Natural killer cell (primary cell): ENCODE measurements at regions of chr10 and their contacts with region 1.

Region 1: GRCh38 chr10:13099666-13100348 is at the start of gene OPTN:
- DNase-seq: peak; percentile 76 to 92
- ATAC-seq: peak; percentile 79 to 92 (median 85)
- H3K4me3 ChIP-seq: peak within 1 kb of the TSS; percentile 73
- H3K4me3 Mint-ChIP-seq: peak within 1 kb of the TSS; percentile 96
- H3K27ac ChIP-seq: peak within 1 kb of the TSS; percentile 91
- H3K27ac Mint-ChIP-seq: peak within 1 kb of the TSS; percentile 89 to 92
- H3K4me1 ChIP-seq: peaks cover 25% of the 10 kb centered on the region
- H3K4me1 Mint-ChIP-seq: peaks cover 43 to 47% of the 10 kb centered on the region in 2 donors
- H3K27me3 ChIP-seq: no peaks in the 10 kb centered on the region
- H3K27me3 Mint-ChIP-seq: no peaks in the 10 kb centered on the region
- CTCF ChIP-seq: peak; percentile 33
- total RNA-seq, gene OPTN: 140 to 177 (median 161) TPM

Region 2: DNA sequence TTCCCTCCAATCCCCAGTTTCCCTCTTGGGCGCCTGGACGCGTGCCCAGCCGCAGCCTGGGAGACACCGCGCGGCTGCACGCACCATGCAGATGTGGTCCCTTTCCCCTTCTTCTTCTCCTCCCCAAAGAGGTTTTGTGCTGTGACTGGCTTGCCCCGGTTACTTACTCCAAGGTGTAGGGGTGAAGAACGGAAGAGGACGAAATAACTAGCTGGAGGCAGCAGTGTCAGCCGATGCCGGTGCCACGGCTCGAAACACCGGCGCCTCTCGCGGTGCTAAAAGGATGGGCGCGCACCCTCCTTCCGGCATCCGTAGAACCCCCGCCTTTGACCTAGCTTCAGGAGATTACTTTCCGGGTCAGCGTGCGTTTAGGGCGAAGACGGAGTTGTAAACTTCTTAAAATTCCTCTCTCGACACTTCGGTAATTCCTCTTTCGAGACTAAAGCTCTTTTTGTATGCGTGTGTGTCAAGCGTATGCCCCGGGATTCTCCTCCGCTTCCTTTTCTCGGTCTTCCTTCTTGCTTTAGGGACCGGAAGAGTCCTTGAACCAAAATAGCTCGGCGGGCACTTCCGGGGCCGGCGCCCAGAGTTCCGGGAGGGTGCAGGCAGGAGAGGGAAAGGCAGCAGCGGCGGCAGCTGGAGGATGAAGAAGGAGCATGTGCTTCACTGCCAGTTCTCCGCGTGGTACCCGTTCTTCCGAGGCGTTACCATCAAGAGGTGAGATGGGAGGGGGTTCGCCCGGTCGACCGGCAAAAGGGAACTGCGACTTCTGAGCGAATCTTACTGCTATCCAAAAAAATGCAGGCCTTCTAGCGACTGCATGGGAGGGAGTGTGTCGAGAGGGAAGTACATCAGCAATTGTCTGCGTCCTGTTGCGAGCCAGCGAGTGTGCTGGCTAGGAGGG is 904.0 kb before region 1 on chr10 and contains the starts of genes CDC123 and NUDT5:
- intact Hi-C with region 1: loop called (anchors 10 kb)
- DNase-seq: peak; percentile 76 to 92
- ATAC-seq: peak; percentile 93 to 96 (median 94)
- H3K4me3 ChIP-seq: peak within 1 kb of the TSS; percentile 92
- H3K4me3 Mint-ChIP-seq: peak within 1 kb of the TSS; percentile 98
- H3K27ac ChIP-seq: peak within 1 kb of the TSS; percentile 93
- H3K27ac Mint-ChIP-seq: peak within 1 kb of the TSS; percentile 97 to 99
- H3K4me1 ChIP-seq: peaks cover 20% of the 10 kb centered on the region
- H3K4me1 Mint-ChIP-seq: peaks cover 48 to 55% of the 10 kb centered on the region in 2 donors
- H3K27me3 ChIP-seq: no peaks in the 10 kb centered on the region
- H3K27me3 Mint-ChIP-seq: no peaks in the 10 kb centered on the region
- CTCF ChIP-seq: no peak
- total RNA-seq, gene CDC123: 45.8 to 53.3 (median 47.6) TPM
- total RNA-seq, gene NUDT5: 25.7 to 39.1 (median 29.4) TPM

Region 3: GRCh38 chr10:13115832-13116803 is 16.3 kb after region 1 on chr10:
- intact Hi-C with region 1: loop called (anchors 2 kb)
- DNase-seq: peak in 1 of 2 donors; percentile 66
- ATAC-seq: peak; percentile 86 to 88 (median 87)
- H3K4me3 ChIP-seq: no peak overlapping the region
- H3K4me3 Mint-ChIP-seq: peak overlapping the region; percentile 81
- H3K27ac ChIP-seq: peak overlapping the region; percentile 90
- H3K27ac Mint-ChIP-seq: peak overlapping the region; percentile 94
- H3K4me1 ChIP-seq: peaks cover 23% of the 10 kb centered on the region
- H3K4me1 Mint-ChIP-seq: peaks cover 42 to 44% of the 10 kb centered on the region in 2 donors
- H3K27me3 ChIP-seq: no peaks in the 10 kb centered on the region
- H3K27me3 Mint-ChIP-seq: no peaks in the 10 kb centered on the region
- CTCF ChIP-seq: no peak

Region 4: DNA sequence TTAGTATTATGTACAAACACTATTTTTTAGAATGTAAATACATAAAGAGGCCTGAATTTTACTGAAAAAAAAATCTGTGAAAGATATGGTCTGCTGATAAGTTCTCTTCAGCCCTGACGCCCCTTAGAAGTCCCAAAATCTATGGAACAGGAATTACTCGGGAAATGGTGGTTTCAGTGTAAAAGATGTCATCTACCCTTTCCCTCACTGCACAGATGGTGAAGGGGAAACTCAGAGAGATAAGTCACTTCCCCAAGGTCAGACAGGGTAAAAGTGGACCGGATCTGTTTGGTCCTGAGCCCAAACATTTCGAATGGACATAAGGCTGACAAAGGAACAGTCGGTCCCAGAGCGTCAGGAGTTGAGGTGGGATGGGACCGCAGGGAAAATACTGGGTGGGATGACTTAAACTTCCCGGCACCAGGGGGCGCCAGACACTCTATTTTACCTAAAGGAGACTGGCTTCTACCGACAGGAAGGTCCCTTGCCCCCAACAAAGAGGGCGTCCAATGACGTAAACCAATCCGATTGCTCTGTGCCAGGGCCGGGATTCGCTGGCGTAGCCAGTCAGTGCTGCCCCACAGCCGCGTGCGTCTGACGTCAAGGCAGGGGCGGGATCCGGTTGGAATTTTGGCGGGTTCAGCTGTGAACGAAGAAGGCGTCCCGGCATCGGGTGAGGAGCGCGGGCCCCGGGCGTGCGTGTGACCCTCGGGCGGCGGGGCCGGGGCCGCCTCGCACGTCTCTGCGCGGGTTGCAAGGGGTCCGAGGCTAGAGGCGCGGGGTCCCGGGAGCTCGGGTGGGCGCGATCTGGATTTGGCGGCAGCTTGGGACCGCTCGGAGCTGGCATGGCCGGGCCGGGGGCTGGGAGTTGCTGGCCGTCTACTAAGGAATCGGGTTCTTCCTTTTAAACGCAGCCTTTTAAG is 61.4 kb after region 1 on chr10 and contains the start of gene MCM10:
- intact Hi-C with region 1: loop called (anchors 5 kb)
- DNase-seq: peak; percentile 95 to 99
- ATAC-seq: peak; percentile 99 to 100 (median 99)
- H3K4me3 ChIP-seq: peak within 1 kb of the TSS; percentile 35
- H3K4me3 Mint-ChIP-seq: peak within 1 kb of the TSS; percentile 95
- H3K27ac ChIP-seq: no peak within 1 kb of the TSS
- H3K27ac Mint-ChIP-seq: peak within 1 kb of the TSS; percentile 87 to 93
- H3K4me1 ChIP-seq: peaks cover 9% of the 10 kb centered on the region
- H3K4me1 Mint-ChIP-seq: peaks cover 21 to 27% of the 10 kb centered on the region in 2 donors
- H3K27me3 ChIP-seq: no peaks in the 10 kb centered on the region
- H3K27me3 Mint-ChIP-seq: no peaks in the 10 kb centered on the region
- CTCF ChIP-seq: peak; percentile 98
- total RNA-seq, gene MCM10: 0.73 to 2.9 (median 1.3) TPM

Region 5: DNA sequence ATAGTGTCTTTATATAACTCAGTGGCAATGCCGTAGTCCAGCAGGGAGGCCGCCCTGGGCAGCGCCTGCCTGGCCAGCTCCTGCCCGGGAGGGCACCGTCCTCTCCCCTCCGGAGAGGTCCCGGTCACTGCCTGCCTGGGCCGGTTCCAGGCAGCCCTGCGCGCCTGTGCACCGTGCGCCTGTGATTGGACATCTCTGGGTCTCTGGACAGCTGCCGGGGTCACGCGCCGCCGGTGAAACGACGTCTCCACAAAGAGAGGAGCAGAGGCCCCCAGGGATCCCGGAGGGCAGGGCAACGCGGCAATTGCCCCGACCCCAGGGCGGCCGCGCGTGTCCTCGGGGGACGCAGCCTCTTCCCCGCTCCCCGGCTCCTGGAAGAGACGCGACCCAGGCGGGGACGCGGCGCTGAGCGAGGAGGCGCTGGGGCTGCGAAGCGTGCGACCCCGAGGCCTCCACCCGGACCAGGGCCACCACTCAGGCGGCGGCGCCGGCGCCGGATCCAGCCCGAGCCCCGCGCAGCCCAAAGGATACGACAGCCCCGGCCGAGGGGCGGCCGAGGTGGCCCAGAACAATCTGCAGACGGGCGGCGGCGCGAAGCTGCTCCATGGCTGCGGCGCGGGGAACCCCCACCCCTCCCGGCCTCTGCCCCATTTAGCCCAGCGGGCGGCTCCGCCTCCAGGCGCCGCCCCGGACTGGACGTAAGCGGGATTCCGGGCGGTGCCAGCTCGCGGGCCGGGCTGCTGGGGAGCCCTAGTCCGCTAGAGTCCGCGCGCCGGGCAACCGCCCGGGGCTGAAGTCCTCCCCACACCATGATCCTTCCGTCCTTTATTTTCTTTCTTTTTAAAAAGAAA is 199.9 kb after region 1 on chr10 and contains the start of gene PHYH:
- intact Hi-C with region 1: loop called (anchors 1 kb)
- DNase-seq: peak; percentile 86 to 92
- ATAC-seq: peak; percentile 72 to 83 (median 76)
- H3K4me3 ChIP-seq: peak within 1 kb of the TSS; percentile 67
- H3K4me3 Mint-ChIP-seq: peak within 1 kb of the TSS; percentile 89
- H3K27ac ChIP-seq: peak within 1 kb of the TSS; percentile 75
- H3K27ac Mint-ChIP-seq: peak within 1 kb of the TSS; percentile 98 to 99
- H3K4me1 ChIP-seq: peaks cover 28% of the 10 kb centered on the region
- H3K4me1 Mint-ChIP-seq: peaks cover 19 to 28% of the 10 kb centered on the region in 2 donors
- H3K27me3 ChIP-seq: no peaks in the 10 kb centered on the region
- H3K27me3 Mint-ChIP-seq: no peaks in the 10 kb centered on the region
- CTCF ChIP-seq: no peak
- total RNA-seq, gene PHYH: 6.9 to 7.3 (median 7.2) TPM